ENCODE measurements at regions of chr12 and their contacts with region 1.

Region 1: GRCh38 chr12:49842519-49843352 is at the start of gene BCDIN3D:
- DNase-seq: peak; percentile 89 to 92
- H3K4me3 ChIP-seq: peak within 1 kb of the TSS; percentile 69
- H3K27ac ChIP-seq: peak within 1 kb of the TSS; percentile 77
- H3K4me1 ChIP-seq: peaks cover 21% of the 10 kb centered on the region
- H3K27me3 ChIP-seq: no peaks in the 10 kb centered on the region
- CTCF ChIP-seq: no peak
- total RNA-seq, gene BCDIN3D: 2.5 and 4.7 TPM in 2 replicates

Region 2: DNA sequence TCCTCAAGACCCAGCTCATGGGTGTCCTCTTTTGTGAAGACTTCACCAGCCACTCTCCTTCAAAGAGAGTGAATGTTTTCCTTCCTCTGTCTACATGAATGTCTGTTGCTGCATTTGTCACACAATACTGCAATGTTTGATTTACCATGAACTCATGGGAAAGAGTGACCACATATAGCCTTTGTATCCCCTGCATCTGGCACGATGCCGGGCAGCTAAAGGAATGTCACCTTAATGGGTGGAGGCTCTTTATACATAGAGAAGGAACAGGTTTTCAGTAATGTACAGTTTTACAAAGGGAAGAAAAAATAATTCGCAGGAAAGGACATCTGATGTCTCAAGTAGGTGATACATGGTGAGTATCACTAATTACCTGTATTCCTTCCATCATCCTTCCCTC is 12.3 kb after region 1 on chr12:
- CTCF ChIA-PET with region 1: no interaction called
- POLR2A ChIA-PET with region 1: no interaction called
- intact Hi-C with region 1: no loop called
- DNase-seq: peak in 1 of 2 experiments; percentile 51
- H3K4me3 ChIP-seq: no peak overlapping the region
- H3K27ac ChIP-seq: no peak overlapping the region
- H3K4me1 ChIP-seq: no peaks in the 10 kb centered on the region
- H3K27me3 ChIP-seq: peaks cover 7% of the 10 kb centered on the region
- CTCF ChIP-seq: no peak

Region 3: GRCh38 chr12:50055831-50056638 is 213.3 kb after region 1 on chr12:
- CTCF ChIA-PET with region 1: no interaction called
- POLR2A ChIA-PET with region 1: no interaction called
- intact Hi-C with region 1: loop called (anchors 2 kb)
- DNase-seq: peak in 1 of 2 experiments; percentile 37
- H3K4me3 ChIP-seq: no peak overlapping the region
- H3K27ac ChIP-seq: no peak overlapping the region
- H3K4me1 ChIP-seq: peaks cover 5% of the 10 kb centered on the region
- H3K27me3 ChIP-seq: peaks cover 23% of the 10 kb centered on the region
- CTCF ChIP-seq: peak; percentile 93

Measured in PC-9 (cell line).